Panc1 (cell line): ENCODE measurements at regions of chr6 and their contacts with region 1.

Region 1: DNA sequence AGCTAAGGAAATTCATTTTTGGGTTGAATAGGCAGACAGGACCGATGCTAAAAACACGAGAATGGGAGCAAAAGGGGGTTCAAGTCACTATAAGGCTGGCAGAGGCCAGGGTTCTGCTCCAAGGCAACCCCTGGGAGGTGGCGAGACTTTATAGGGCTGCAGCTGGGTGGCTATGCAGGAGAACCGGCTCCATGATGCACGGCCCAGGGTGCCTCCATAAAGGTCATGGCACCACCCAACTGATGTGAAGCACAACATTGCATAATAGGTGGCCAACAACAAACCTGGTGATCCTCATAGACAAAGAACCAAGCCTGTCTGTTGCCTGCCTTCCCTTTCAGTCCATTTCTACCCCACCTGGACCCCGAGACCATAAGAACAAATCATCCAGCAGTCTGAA is 398.1 kb downstream of the CD83 start:
- DNase-seq: no peak
- ATAC-seq: no peak
- H3K4me3 ChIP-seq: no peak overlapping the region
- H3K27ac ChIP-seq: no peak overlapping the region
- H3K4me1 ChIP-seq: no peaks in the 10 kb centered on the region
- H3K27me3 ChIP-seq: no peaks in the 10 kb centered on the region
- CTCF ChIP-seq: no peak

Region 2: DNA sequence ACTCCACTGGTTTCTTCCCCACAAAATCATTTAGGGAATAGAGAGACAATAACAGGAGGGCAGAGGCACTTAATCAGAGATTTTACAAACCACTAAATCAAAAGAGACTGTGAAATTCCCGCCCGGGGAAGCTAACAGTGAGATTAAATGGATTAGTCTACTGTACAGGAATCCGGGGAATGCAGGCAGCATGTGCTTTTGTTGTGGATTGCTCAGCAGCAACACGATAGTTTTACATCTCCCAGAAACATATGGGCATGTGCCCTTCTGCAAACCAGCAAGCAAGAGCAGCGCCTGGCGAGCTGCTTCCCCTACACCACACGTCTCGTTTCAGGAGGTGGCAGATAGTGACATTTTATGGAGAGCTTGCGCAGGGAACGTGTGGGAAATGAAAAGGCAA is 15.8 kb before region 1 on chr6:
- CTCF ChIA-PET with region 1: no interaction called
- POLR2A ChIA-PET with region 1: interaction called, 11 read pairs
- in situ Hi-C with region 1: no loop called
- intact Hi-C with region 1: no loop called
- DNase-seq: no peak
- ATAC-seq: peak; percentile 94
- H3K4me3 ChIP-seq: no peak overlapping the region
- H3K27ac ChIP-seq: no peak overlapping the region
- H3K4me1 ChIP-seq: no peaks in the 10 kb centered on the region; the same call in 1 of the 2 replicates
- H3K27me3 ChIP-seq: no peaks in the 10 kb centered on the region
- CTCF ChIP-seq: no peak

Region 3: GRCh38 chr6:14656078-14656521 is 140.4 kb after region 1 on chr6:
- CTCF ChIA-PET with region 1: no interaction called
- POLR2A ChIA-PET with region 1: no interaction called
- in situ Hi-C with region 1: no loop called
- intact Hi-C with region 1: no loop called
- DNase-seq: no peak
- ATAC-seq: no peak
- H3K4me3 ChIP-seq: no peak overlapping the region
- H3K27ac ChIP-seq: no peak overlapping the region
- H3K4me1 ChIP-seq: no peaks in the 10 kb centered on the region
- H3K27me3 ChIP-seq: peaks cover 13% of the 10 kb centered on the region
- CTCF ChIP-seq: no peak

Region 4: GRCh38 chr6:14676064-14676463 is 160.4 kb after region 1 on chr6:
- CTCF ChIA-PET with region 1: no interaction called
- POLR2A ChIA-PET with region 1: no interaction called
- in situ Hi-C with region 1: no loop called
- intact Hi-C with region 1: no loop called
- DNase-seq: no peak
- ATAC-seq: no peak
- H3K4me3 ChIP-seq: no peak overlapping the region
- H3K27ac ChIP-seq: no peak overlapping the region
- H3K4me1 ChIP-seq: no peaks in the 10 kb centered on the region
- H3K27me3 ChIP-seq: no peaks in the 10 kb centered on the region; the same call in 1 of the 2 replicates
- CTCF ChIP-seq: no peak